Calu3 (cell line): ENCODE measurements at regions of chr2 and their contacts with region 1.

Region 1: GRCh38 chr2:9205963-9206948 is at the start of gene ASAP2:
- DNase-seq: peak; percentile 84
- H3K4me3 Mint-ChIP-seq: peak within 1 kb of the TSS; percentile 95
- H3K27ac Mint-ChIP-seq: peak within 1 kb of the TSS; percentile 84
- H3K4me1 Mint-ChIP-seq: peaks cover 39% of the 10 kb centered on the region
- H3K27me3 Mint-ChIP-seq: no peaks in the 10 kb centered on the region
- CTCF ChIP-seq: peak; percentile 81
- total RNA-seq, gene ASAP2: 75.1 and 78.6 TPM in 2 replicates

Region 2: GRCh38 chr2:9021563-9022211 is 184.6 kb before region 1 on chr2:
- CTCF ChIA-PET with region 1: no interaction called
- intact Hi-C with region 1: no loop called
- DNase-seq: no peak
- H3K4me3 Mint-ChIP-seq: no peak overlapping the region
- H3K27ac Mint-ChIP-seq: no peak overlapping the region
- H3K4me1 Mint-ChIP-seq: no peaks in the 10 kb centered on the region
- H3K27me3 Mint-ChIP-seq: no peaks in the 10 kb centered on the region
- CTCF ChIP-seq: no peak

Region 3: DNA sequence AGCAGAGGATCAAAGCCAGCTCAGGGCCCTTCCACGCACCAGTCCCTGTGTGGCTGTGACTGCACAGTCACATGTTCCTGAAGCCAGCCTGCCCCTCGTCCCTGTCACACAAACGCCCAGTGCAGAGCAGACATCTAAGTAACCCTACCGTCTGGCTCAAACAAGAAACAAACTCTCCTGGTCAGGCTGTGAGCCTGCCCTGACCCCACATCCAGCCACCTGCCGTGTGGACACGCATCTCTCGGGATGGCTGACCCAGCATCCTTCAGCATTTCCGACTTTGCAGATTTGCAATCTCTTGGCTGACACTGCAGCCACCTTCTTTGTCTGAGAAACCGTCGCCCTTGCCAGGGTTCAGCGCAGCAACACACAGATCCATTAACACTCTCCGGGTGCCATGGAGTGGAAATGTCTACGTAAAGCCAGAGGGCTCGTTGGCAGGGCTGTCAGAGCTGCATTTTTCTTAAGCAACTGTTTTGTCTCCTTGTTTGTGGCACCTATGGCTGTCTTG is 82.0 kb before region 1 on chr2:
- CTCF ChIA-PET with region 1: no interaction called
- intact Hi-C with region 1: no loop called
- DNase-seq: no peak
- H3K4me3 Mint-ChIP-seq: no peak overlapping the region
- H3K27ac Mint-ChIP-seq: no peak overlapping the region
- H3K4me1 Mint-ChIP-seq: no peaks in the 10 kb centered on the region
- H3K27me3 Mint-ChIP-seq: no peaks in the 10 kb centered on the region
- CTCF ChIP-seq: no peak

Region 4: DNA sequence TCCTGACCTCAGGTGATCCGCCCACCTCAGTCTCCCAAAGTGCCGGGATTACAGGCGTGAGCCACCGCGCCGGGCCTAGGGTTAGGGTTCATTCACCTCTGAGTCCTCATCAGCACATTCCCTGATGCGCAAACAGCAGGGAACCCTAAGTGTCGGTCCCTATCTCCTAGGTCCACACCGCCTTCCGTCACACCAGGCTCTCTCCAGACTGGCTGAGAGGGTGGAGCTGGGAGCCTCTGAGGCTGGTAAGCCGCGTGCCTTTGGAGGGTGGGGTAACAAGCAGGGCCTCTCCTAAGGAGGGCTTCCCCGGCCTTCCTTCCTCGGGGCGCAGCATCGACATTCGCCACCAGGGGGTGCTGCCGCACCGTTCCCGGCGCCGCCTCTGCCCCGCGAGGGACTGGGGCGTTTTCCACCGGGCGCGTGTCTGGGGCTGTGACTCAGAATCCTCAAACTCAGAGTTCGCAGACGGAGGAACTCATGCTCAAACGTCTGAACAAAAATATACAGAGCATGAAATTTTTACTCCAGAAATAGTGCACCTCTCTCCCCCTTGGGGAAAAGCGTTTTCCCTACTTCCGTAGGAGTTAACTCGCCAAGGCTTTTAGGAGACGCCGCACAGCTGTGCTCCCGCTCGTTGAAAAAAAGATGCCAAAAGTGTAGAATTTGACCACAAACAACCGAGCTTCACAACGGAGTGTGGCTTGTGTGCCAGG is 63.5 kb before region 1 on chr2:
- CTCF ChIA-PET with region 1: interaction called, 7 read pairs
- intact Hi-C with region 1: loop called (anchors 1 kb)
- DNase-seq: peak; percentile 96
- H3K4me3 Mint-ChIP-seq: peak overlapping the region; percentile 45
- H3K27ac Mint-ChIP-seq: no peak overlapping the region
- H3K4me1 Mint-ChIP-seq: peaks cover 18% of the 10 kb centered on the region
- H3K27me3 Mint-ChIP-seq: no peaks in the 10 kb centered on the region
- CTCF ChIP-seq: peak; percentile 97

Region 5: DNA sequence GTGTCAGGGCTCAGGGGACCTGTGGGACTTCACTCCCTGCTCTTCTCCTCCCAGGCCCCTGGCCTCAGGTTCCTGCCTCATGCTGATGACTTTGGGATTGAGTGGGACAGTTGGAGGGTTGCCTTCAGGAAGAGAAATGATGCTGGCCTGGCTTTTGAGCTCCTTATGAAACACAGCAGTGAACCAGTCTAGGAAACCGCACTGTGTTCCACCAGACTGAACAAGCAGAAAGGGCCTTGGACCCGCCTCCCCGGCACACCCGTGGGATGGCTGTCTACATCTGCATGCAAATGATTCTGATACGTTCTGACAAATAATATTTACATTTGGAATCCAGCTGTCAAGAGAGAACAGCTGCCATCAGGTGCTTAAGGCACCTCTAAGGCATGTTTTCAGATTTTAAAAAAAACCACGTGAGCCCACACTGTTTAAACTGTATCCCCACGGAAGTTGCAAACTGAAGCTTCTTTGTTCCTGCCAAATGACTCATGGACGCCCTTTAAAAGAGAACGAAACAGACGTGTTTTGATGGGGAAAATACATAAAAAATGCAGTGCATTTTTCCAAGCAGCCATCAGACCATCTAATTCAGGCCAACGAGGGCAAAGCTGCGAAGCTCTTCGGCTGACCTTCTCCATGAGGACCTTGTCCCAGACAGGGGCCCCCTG is 27.2 kb before region 1 on chr2:
- CTCF ChIA-PET with region 1: interaction called, 13 read pairs
- intact Hi-C with region 1: loop called (anchors 2 kb)
- DNase-seq: peak; percentile 67
- H3K4me3 Mint-ChIP-seq: peak overlapping the region; percentile 55
- H3K27ac Mint-ChIP-seq: peak overlapping the region; percentile 86
- H3K4me1 Mint-ChIP-seq: peaks cover 54% of the 10 kb centered on the region
- H3K27me3 Mint-ChIP-seq: no peaks in the 10 kb centered on the region
- CTCF ChIP-seq: no peak

Region 6: GRCh38 chr2:9234680-9235387 is 28.6 kb after region 1 on chr2:
- CTCF ChIA-PET with region 1: interaction called, 12 read pairs
- intact Hi-C with region 1: loop called (anchors 1 kb)
- DNase-seq: peak; percentile 86
- H3K4me3 Mint-ChIP-seq: peak overlapping the region; percentile 82
- H3K27ac Mint-ChIP-seq: peak overlapping the region; percentile 100
- H3K4me1 Mint-ChIP-seq: peaks cover 88% of the 10 kb centered on the region
- H3K27me3 Mint-ChIP-seq: no peaks in the 10 kb centered on the region
- CTCF ChIP-seq: no peak

Region 7: GRCh38 chr2:9249020-9249800 is 43.0 kb after region 1 on chr2:
- CTCF ChIA-PET with region 1: no interaction called
- intact Hi-C with region 1: loop called (anchors 1 kb)
- DNase-seq: peak; percentile 43
- H3K4me3 Mint-ChIP-seq: peak overlapping the region; percentile 66
- H3K27ac Mint-ChIP-seq: peak overlapping the region; percentile 76
- H3K4me1 Mint-ChIP-seq: peaks cover 81% of the 10 kb centered on the region
- H3K27me3 Mint-ChIP-seq: no peaks in the 10 kb centered on the region
- CTCF ChIP-seq: no peak

Region 8: GRCh38 chr2:9287400-9288043 is 81.3 kb after region 1 on chr2:
- CTCF ChIA-PET with region 1: interaction called, 5 read pairs
- intact Hi-C with region 1: loop called (anchors 5 kb)
- DNase-seq: peak; percentile 77
- H3K4me3 Mint-ChIP-seq: peak overlapping the region; percentile 51
- H3K27ac Mint-ChIP-seq: peak overlapping the region; percentile 86
- H3K4me1 Mint-ChIP-seq: peaks cover 82% of the 10 kb centered on the region
- H3K27me3 Mint-ChIP-seq: no peaks in the 10 kb centered on the region
- CTCF ChIP-seq: no peak

Region 9: DNA sequence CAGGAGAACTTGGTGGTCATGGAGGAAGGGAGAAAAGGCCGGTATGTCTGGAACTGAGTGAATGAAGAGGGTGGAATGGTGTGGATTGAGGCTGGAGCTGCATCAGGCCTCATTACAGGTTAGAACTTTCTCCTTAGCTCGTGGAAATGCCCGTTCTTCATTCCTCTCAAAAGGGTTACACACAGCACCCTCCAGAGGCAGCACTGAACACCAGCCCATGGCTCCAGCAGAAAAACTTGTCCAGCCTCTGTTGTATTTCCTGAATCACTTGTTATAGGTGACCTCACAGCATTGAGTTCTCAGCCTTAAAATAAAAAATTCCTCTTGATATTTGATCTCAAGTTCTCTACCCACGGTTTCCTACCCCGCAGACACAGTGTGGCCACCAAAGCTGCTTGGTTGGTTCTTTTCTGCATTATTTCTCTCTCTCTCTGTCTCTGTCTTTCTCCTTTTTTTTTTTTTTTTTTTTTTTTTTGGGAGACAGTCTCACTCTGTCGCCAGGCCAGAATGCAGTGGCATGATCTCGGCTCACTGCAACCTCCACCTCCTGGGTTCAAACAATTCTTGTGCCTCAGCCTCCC is 127.4 kb after region 1 on chr2:
- CTCF ChIA-PET with region 1: interaction called, 4 read pairs
- intact Hi-C with region 1: loop called (anchors 2 kb)
- DNase-seq: peak; percentile 74
- H3K4me3 Mint-ChIP-seq: no peak overlapping the region
- H3K27ac Mint-ChIP-seq: peak overlapping the region; percentile 76
- H3K4me1 Mint-ChIP-seq: peaks cover 61% of the 10 kb centered on the region
- H3K27me3 Mint-ChIP-seq: no peaks in the 10 kb centered on the region
- CTCF ChIP-seq: peak; percentile 35

Region 10: GRCh38 chr2:9525266-9525665 is 319.0 kb after region 1 on chr2:
- CTCF ChIA-PET with region 1: no interaction called
- intact Hi-C with region 1: no loop called
- DNase-seq: no peak
- H3K4me3 Mint-ChIP-seq: no peak overlapping the region
- H3K27ac Mint-ChIP-seq: no peak overlapping the region
- H3K4me1 Mint-ChIP-seq: no peaks in the 10 kb centered on the region
- H3K27me3 Mint-ChIP-seq: no peaks in the 10 kb centered on the region
- CTCF ChIP-seq: no peak